ENCODE measurements at regions of chr12 and their contacts with region 1.

Region 1: DNA sequence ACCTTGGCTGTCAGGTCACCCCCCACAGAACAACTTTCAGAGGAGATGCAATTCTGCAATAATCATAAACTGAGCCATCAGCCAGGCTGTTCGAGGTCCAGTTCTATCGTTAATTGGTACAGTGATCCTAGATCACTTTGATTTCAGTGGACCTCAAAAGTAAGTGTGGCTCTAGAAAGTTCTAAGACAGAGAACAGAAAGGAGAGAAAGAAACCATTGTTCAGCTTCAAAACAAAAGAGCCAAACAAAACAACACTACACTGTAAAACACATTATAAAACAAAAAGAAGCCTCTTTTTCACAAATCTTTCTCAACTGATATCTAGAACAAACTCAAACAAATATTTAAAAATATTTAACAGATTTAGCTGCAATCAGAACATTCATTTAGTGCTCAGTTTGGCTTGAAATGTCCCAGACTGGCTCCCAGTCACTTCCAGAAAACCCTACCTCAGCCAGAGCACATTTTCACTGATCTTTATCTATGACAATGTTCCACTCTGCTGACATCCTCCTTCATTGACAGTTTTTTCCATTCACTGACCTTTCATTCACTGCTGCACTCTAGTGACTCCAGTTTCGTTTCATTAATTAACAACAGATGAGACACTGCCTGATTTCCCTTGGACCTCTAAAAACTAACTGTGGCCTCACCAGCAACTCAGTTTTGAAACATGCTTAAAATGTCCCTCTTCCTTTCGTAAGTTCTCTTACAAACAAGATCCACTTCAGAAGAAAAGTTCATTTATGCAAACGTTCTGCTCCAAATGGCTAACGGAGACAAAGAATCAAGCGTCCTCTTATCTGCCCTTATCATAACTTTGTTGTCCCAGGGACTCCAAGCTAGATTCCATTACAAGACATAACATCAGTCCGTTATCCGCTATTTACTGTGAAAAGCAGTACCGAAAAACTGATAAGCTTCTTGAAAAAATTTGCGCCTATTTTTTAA is 56.8 kb downstream of the DUSP16 start:
- DNase-seq: peak; percentile 51
- ATAC-seq: peak; percentile 79
- H3K4me3 Mint-ChIP-seq: peak overlapping the region; percentile 55
- H3K27ac Mint-ChIP-seq: peak overlapping the region; percentile 96
- H3K4me1 Mint-ChIP-seq: peaks cover 55% of the 10 kb centered on the region
- H3K27me3 Mint-ChIP-seq: no peaks in the 10 kb centered on the region

Region 2: DNA sequence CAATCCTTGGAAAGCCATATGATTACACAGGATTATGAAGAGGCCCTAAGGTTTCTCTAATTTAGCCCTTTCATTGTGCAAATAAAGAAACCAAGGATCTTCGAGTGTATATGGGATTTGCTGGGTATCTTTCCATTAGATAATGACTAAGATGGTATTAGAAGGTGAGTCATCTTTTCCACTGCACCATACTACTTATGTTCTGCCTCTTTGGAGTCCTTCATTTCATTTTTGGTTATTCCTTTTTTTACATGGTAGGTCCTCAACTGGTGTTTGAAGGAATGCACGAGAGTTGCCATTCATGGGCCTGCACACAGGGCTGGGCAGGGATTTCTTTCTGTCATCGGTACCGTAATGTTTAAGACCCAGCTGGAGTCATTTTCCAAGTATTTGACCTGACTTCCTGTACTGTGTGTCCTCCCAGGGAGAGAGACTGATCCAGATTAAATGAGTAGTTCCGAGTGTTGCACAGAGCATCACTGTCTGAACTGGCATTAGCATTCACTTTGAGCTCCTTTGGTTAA is 63.2 kb before region 1 on chr12:
- CTCF ChIA-PET with region 1: interaction called, 5 read pairs
- POLR2A ChIA-PET with region 1: interaction called, 8 read pairs
- intact Hi-C with region 1: loop called in 1 of 2 experiments (anchors 5 kb)
- DNase-seq: no peak
- ATAC-seq: peak; percentile 16
- H3K4me3 Mint-ChIP-seq: peak overlapping the region; percentile 46
- H3K27ac Mint-ChIP-seq: peak overlapping the region; percentile 98
- H3K4me1 Mint-ChIP-seq: peaks cover 81% of the 10 kb centered on the region
- H3K27me3 Mint-ChIP-seq: no peaks in the 10 kb centered on the region

Region 3: GRCh38 chr12:12461923-12462315 is 43.9 kb before region 1 on chr12:
- CTCF ChIA-PET with region 1: interaction called, 6 read pairs
- POLR2A ChIA-PET with region 1: interaction called, 12 read pairs
- intact Hi-C with region 1: loop called in 1 of 2 experiments (anchors 1 kb)
- DNase-seq: peak; percentile 71
- ATAC-seq: peak; percentile 81
- H3K4me3 Mint-ChIP-seq: peak overlapping the region; percentile 35
- H3K27ac Mint-ChIP-seq: peak overlapping the region; percentile 85
- H3K4me1 Mint-ChIP-seq: peaks cover 78% of the 10 kb centered on the region
- H3K27me3 Mint-ChIP-seq: no peaks in the 10 kb centered on the region

Region 4: DNA sequence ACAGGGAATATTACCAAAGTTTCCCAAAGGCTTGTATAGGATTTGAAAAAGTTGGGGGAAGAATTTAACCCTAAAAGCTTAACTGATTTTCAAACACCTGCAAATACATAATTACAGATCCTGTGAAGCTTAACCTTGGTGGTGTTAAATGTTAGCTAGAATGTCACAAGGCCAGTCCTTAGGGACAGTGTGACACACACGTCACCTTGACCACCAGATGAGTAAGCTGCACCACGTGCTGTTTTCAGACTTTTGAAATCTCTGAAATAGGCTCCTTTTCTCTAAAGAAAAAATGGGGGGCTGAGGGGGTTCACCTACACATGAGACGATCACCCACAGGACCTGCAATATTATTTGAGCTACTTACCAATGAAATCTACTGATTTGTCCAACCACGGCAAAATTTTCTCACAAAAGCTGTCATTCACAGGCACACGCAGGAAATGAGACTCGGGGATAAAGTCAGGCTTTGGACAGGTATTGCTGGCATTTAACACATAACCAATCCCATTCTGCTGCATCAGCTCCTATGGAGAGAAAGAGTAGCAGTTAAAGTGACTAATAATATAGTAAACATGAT is 19.1 kb before region 1 on chr12:
- CTCF ChIA-PET with region 1: interaction called, 7 read pairs
- POLR2A ChIA-PET with region 1: interaction called, 8 read pairs
- intact Hi-C with region 1: loop called (anchors 2 kb)
- DNase-seq: no peak
- ATAC-seq: peak; percentile 32
- H3K4me3 Mint-ChIP-seq: no peak overlapping the region
- H3K27ac Mint-ChIP-seq: peak overlapping the region; percentile 80
- H3K4me1 Mint-ChIP-seq: peaks cover 57% of the 10 kb centered on the region
- H3K27me3 Mint-ChIP-seq: no peaks in the 10 kb centered on the region

Region 5: DNA sequence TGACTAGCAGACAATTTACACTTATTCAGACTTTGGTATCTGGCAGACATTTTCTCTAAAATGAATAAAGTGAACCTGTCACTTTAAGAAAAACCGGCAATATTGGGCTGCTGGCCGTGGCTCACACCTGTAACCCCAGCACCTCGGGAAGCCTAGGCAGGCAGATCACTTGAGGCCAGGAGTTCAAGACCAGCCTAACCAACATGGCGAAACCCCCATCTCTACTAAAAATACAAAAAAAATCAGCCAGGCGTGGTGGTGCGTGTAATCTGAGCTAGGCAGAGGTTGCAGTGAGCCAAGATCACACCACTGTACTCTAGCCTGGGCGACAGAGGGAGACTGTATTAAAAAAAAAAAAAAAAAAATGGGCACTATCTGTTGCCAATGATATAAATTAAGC is 45.3 kb after region 1 on chr12:
- CTCF ChIA-PET with region 1: no interaction called
- POLR2A ChIA-PET with region 1: no interaction called
- intact Hi-C with region 1: no loop called
- DNase-seq: no peak
- ATAC-seq: no peak
- H3K4me3 Mint-ChIP-seq: no peak overlapping the region
- H3K27ac Mint-ChIP-seq: no peak overlapping the region
- H3K4me1 Mint-ChIP-seq: peaks cover 29% of the 10 kb centered on the region
- H3K27me3 Mint-ChIP-seq: no peaks in the 10 kb centered on the region

Region 6: GRCh38 chr12:12890815-12891645 is 385.2 kb after region 1 on chr12 and contains the start of gene GPRC5A:
- CTCF ChIA-PET with region 1: no interaction called
- POLR2A ChIA-PET with region 1: no interaction called
- intact Hi-C with region 1: loop called in 1 of 2 experiments (anchors 10 kb)
- DNase-seq: peak; percentile 65
- ATAC-seq: peak; percentile 75
- H3K4me3 Mint-ChIP-seq: peak within 1 kb of the TSS; percentile 70
- H3K27ac Mint-ChIP-seq: peak within 1 kb of the TSS; percentile 69
- H3K4me1 Mint-ChIP-seq: peaks cover 11% of the 10 kb centered on the region
- H3K27me3 Mint-ChIP-seq: peaks cover 26% of the 10 kb centered on the region
- total RNA-seq, gene GPRC5A: 0.14 to 0.35 TPM

Measured in activated CD4-positive, alpha-beta T cell treated with anti-CD3 and anti-CD28 coated beads for 36 hours (primary cell).